ENCODE measurements at regions of chr6 and their contacts with region 1.

Region 1: GRCh38 chr6:42493914-42494539 is 42.3 kb upstream of the TRERF1 start:
- DNase-seq: no peak
- ATAC-seq: no peak
- H3K4me3 ChIP-seq: no peak overlapping the region
- H3K27ac ChIP-seq: no peak overlapping the region
- H3K4me1 ChIP-seq: no peaks in the 10 kb centered on the region
- H3K27me3 ChIP-seq: no peaks in the 10 kb centered on the region
- CTCF ChIP-seq: no peak
- POLR2A ChIP-seq: no peak
- RAD21 ChIP-seq: no peak

Region 2: DNA sequence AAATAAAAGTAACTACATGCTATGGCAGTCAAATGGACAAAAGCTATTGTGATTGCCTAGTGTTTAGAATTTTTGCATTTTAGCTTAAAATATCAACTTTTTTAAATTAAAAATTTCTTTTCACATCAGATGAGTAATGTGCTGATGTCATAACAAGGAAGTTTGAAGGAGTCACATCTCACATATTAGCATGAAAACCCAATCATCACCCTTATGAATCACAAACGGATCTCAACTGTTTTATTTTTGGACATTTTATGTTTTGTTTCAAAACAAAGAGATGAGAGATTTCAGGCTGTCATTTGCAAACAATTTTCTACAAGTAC is 11.3 kb after region 1 on chr6:
- CTCF ChIA-PET with region 1: no interaction called
- POLR2A ChIA-PET with region 1: interaction called, 10 read pairs
- RAD21 ChIA-PET with region 1: no interaction called
- intact Hi-C with region 1: no loop called
- DNase-seq: no peak
- ATAC-seq: peak; percentile 47
- H3K4me3 ChIP-seq: no peak overlapping the region
- H3K27ac ChIP-seq: peak overlapping the region; percentile 56; the same call in 1 of the 2 replicates
- H3K4me1 ChIP-seq: peaks cover 6 to 26% of the 10 kb centered on the region in 2 experiments; a peak in 3 of 4 replicates
- H3K27me3 ChIP-seq: no peaks in the 10 kb centered on the region
- CTCF ChIP-seq: no peak
- POLR2A ChIP-seq: no peak
- RAD21 ChIP-seq: no peak